ENCODE measurements at regions of chr6 and their contacts with region 1.

Region 1: GRCh38 chr6:42547407-42548329 is 16.2 kb upstream of the UBR2 start:
- DNase-seq: peak; percentile 90
- ATAC-seq: peak; percentile 100
- H3K4me3 Mint-ChIP-seq: peak overlapping the region; percentile 57
- H3K27ac Mint-ChIP-seq: no peak overlapping the region
- H3K4me1 Mint-ChIP-seq: peaks cover 13% of the 10 kb centered on the region
- H3K27me3 Mint-ChIP-seq: peaks cover 12% of the 10 kb centered on the region

Region 2: GRCh38 chr6:42217519-42218367 is 329.9 kb before region 1 on chr6 and contains the start of gene MRPS10:
- CTCF ChIA-PET with region 1: interaction called, 59 read pairs
- POLR2A ChIA-PET with region 1: interaction called, 6 read pairs
- DNase-seq: peak; percentile 95
- ATAC-seq: peak; percentile 99
- H3K4me3 Mint-ChIP-seq: peak within 1 kb of the TSS; percentile 100
- H3K27ac Mint-ChIP-seq: peak within 1 kb of the TSS; percentile 91
- H3K4me1 Mint-ChIP-seq: peaks cover 30% of the 10 kb centered on the region
- H3K27me3 Mint-ChIP-seq: no peaks in the 10 kb centered on the region
- total RNA-seq, gene MRPS10: 32.6 to 33.8 TPM

Region 3: DNA sequence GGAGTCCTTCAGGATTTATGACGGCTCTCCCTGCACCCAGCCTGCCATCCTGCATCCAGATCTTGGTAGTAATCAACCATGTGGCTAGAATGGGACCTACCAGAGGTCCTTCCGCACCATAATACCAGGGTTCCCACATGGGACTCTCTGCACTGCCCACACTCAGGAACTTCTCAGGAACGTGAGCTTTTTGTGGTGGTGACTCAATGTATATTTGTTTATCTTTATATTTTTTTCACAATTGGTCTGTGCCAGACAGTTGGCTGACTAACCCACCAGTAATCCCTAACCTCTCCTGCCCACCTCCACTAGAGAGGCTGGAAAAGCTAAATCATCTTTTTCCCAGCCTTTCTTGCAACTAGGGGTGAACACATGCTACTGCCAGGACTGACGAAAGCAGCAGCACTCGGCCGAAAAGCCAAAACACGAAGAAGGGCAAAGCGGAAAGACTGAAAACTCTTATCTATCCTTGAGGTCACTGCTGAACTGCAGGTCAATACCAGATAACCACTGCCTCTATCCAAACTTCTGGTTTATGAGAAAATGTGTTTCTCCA is 208.9 kb before region 1 on chr6:
- CTCF ChIA-PET with region 1: interaction called, 15 read pairs
- POLR2A ChIA-PET with region 1: no interaction called
- DNase-seq: no peak
- ATAC-seq: no peak
- H3K4me3 Mint-ChIP-seq: no peak overlapping the region
- H3K27ac Mint-ChIP-seq: no peak overlapping the region
- H3K4me1 Mint-ChIP-seq: peaks cover 50% of the 10 kb centered on the region
- H3K27me3 Mint-ChIP-seq: no peaks in the 10 kb centered on the region

Region 4: GRCh38 chr6:42402184-42402583 is 145.5 kb before region 1 on chr6:
- CTCF ChIA-PET with region 1: interaction called, 10 read pairs
- POLR2A ChIA-PET with region 1: no interaction called
- DNase-seq: peak; percentile 68
- ATAC-seq: peak; percentile 88
- H3K4me3 Mint-ChIP-seq: no peak overlapping the region
- H3K27ac Mint-ChIP-seq: peak overlapping the region; percentile 47
- H3K4me1 Mint-ChIP-seq: peaks cover 47% of the 10 kb centered on the region
- H3K27me3 Mint-ChIP-seq: no peaks in the 10 kb centered on the region

Region 5: GRCh38 chr6:42460883-42461282 is 86.8 kb before region 1 on chr6:
- CTCF ChIA-PET with region 1: interaction called, 21 read pairs
- POLR2A ChIA-PET with region 1: no interaction called
- DNase-seq: no peak
- ATAC-seq: no peak
- H3K4me3 Mint-ChIP-seq: no peak overlapping the region
- H3K27ac Mint-ChIP-seq: no peak overlapping the region
- H3K4me1 Mint-ChIP-seq: no peaks in the 10 kb centered on the region
- H3K27me3 Mint-ChIP-seq: peaks cover 6% of the 10 kb centered on the region

Region 6: DNA sequence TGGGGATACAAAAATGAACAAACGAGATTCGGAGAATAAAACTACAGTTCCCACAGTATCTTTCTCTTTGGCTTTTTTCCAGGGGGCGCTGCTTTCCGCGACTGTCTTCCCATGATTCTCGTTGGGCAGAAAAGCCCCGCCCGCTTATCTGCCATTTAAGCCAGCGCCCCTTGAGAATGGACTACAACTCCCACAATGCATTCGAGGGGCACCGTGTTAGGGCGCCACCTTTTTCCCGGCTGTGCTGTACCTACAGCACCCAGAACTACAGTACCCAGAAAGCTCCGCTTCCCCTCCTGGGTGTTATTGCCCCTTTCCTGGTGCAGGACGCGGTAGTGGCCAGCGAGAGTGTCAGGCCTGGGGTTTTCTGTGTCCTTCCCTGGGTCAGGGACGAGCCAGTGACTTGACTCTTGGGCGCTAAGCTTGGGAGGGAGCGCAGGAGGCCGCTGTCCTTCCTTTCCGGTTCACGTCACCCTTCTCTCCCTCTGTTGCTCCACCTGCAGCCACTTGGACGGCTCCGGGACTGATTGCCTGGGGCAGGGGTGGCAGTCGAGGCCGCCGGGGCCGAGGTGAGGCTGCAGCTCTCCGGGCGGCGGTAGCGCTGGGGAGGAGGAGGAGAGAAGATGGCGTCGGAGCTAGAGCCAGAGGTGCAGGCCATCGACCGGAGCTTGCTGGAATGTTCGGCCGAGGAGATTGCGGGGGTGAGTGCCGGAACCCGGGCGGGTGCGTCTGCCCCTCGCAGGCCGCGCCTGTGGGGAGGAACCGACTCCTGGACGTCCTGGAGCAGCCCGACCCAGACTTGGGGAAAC is 16.2 kb after region 1 on chr6 and contains the start of gene UBR2:
- CTCF ChIA-PET with region 1: interaction called, 109 read pairs
- POLR2A ChIA-PET with region 1: interaction called, 5 read pairs
- DNase-seq: peak; percentile 97
- ATAC-seq: peak; percentile 96
- H3K4me3 Mint-ChIP-seq: peak within 1 kb of the TSS; percentile 96
- H3K27ac Mint-ChIP-seq: peak within 1 kb of the TSS; percentile 91
- H3K4me1 Mint-ChIP-seq: peaks cover 34% of the 10 kb centered on the region
- H3K27me3 Mint-ChIP-seq: peaks cover 3% of the 10 kb centered on the region
- total RNA-seq, gene UBR2: 23.6 to 24.8 TPM

Region 7: GRCh38 chr6:43541774-43542471 is 994.3 kb after region 1 on chr6:
- CTCF ChIA-PET with region 1: no interaction called
- POLR2A ChIA-PET with region 1: no interaction called
- DNase-seq: no peak
- ATAC-seq: no peak
- H3K4me3 Mint-ChIP-seq: no peak overlapping the region
- H3K27ac Mint-ChIP-seq: no peak overlapping the region
- H3K4me1 Mint-ChIP-seq: peaks cover 2% of the 10 kb centered on the region
- H3K27me3 Mint-ChIP-seq: no peaks in the 10 kb centered on the region

Measured in activated CD8-positive, alpha-beta T cell treated with anti-CD3 and anti-CD28 coated beads, Interleukin-2, amount 10 ng/mL, durations not matched to agents 7 days and 5 days (primary cell).